ENCODE measurements at regions of chr3 and their contacts with region 1.

Region 1: DNA sequence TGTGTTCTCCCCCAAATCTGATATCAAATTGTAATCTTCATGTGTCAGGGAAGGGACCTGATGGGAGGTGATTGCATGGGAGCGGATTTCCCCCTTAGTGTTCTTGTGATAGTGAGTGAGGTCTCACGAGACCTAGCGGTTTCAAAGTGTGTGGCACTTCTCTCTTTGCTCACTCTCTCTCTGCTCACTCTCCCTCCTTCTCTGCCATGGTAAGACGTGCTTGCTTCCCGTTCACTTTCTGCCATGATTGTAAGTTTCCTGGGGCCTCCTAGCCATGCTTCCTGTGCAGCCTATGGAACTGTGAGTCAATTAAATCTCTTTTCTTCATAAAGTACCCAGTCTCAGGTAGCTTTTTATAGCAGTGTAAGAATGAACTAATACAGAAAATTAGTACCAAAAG is 30.6 kb upstream of the OR5H6 start:
- DNase-seq: no peak
- H3K4me3 ChIP-seq: no peak overlapping the region
- H3K27ac ChIP-seq: no peak overlapping the region
- H3K4me1 ChIP-seq: no peaks in the 10 kb centered on the region
- H3K27me3 ChIP-seq: no peaks in the 10 kb centered on the region
- CTCF ChIP-seq: no peak

Region 2: DNA sequence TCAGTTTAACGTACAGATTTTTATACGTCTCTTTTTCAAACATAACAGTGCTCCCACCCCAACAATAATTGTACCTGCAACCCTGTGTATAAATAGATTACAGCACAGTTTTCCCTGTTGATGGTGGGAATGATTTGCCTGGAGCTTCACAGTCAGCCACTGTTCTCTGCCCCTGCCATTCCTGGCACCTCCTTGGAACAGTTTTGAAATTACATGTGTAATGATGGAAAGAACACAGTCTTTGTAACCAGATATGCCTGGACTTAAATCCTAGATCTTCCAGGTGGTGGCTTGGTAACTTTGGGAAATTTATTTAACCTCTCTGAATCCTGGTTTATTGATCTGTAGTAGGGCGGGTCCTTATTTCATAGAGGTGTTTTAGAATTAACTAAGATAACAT is 384.7 kb before region 1 on chr3:
- CTCF ChIA-PET with region 1: no interaction called
- dilution Hi-C with region 1: no loop called
- in situ Hi-C with region 1: no loop called
- intact Hi-C with region 1: no loop called
- DNase-seq: no peak
- H3K4me3 ChIP-seq: no peak overlapping the region
- H3K27ac ChIP-seq: no peak overlapping the region
- H3K4me1 ChIP-seq: no peaks in the 10 kb centered on the region
- H3K27me3 ChIP-seq: no peaks in the 10 kb centered on the region
- CTCF ChIP-seq: no peak

Region 3: GRCh38 chr3:98172621-98173020 is 60.8 kb before region 1 on chr3:
- CTCF ChIA-PET with region 1: no interaction called
- dilution Hi-C with region 1: loop called (anchors 5 kb)
- in situ Hi-C with region 1: no loop called
- intact Hi-C with region 1: no loop called
- DNase-seq: no peak
- H3K4me3 ChIP-seq: no peak overlapping the region
- H3K27ac ChIP-seq: no peak overlapping the region
- H3K4me1 ChIP-seq: no peaks in the 10 kb centered on the region
- H3K27me3 ChIP-seq: no peaks in the 10 kb centered on the region
- CTCF ChIP-seq: no peak

Region 4: DNA sequence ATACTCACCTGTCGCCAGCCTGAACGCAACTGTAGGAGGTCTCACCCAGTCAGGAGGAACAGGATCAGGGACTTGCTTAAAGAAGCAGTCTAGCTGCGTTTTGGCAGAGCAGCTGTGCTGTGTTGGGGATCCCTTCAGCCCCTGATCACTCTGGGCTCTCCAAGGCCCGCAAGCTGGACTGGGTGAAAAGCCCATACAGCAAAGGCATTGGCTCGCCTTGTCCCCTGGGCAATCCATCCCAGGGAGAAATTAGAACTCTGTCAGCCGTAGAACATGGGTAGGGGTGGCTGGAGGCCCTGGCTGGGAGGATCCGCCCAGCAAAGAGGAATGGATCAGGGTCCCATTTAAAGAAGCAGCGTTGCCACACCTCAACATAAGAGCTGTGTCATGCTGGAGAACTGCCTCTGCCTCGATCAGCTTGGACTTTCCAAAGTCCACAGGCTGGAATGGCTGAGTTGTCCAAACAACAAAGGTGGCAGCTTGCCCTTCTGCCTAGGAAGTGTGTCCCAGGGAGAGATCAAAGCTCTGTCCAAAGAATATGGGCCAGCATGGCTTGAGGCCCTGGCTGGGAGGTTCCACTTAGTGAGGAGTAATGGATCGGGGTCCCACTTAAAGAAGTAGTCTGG is 58.0 kb after region 1 on chr3:
- CTCF ChIA-PET with region 1: no interaction called
- dilution Hi-C with region 1: loop called (anchors 5 kb)
- in situ Hi-C with region 1: no loop called
- intact Hi-C with region 1: no loop called
- DNase-seq: no peak
- H3K4me3 ChIP-seq: no peak overlapping the region
- H3K27ac ChIP-seq: no peak overlapping the region
- H3K4me1 ChIP-seq: no peaks in the 10 kb centered on the region
- H3K27me3 ChIP-seq: no peaks in the 10 kb centered on the region
- CTCF ChIP-seq: no peak